ENCODE measurements at regions of chr11 and their contacts with region 1.

Region 1: GRCh38 chr11:27839226-27839870 is 139.1 kb upstream of the BDNF start:
- DNase-seq: no peak
- ATAC-seq: no peak
- H3K4me3 ChIP-seq: no peak overlapping the region
- H3K4me3 Mint-ChIP-seq: no peak overlapping the region
- H3K27ac ChIP-seq: no peak overlapping the region
- H3K27ac Mint-ChIP-seq: no peak overlapping the region
- H3K4me1 ChIP-seq: no peaks in the 10 kb centered on the region
- H3K4me1 Mint-ChIP-seq: no peaks in the 10 kb centered on the region
- H3K27me3 ChIP-seq: no peaks in the 10 kb centered on the region
- H3K27me3 Mint-ChIP-seq: peaks cover 0 to 12% (median 10%) of the 10 kb centered on the region in 5 donors

Region 2: GRCh38 chr11:28114731-28115130 is 275.4 kb after region 1 on chr11:
- CTCF ChIA-PET with region 1: no interaction called
- POLR2A ChIA-PET with region 1: no interaction called
- intact Hi-C with region 1: no loop called
- DNase-seq: no peak
- ATAC-seq: no peak
- H3K4me3 ChIP-seq: no peak overlapping the region
- H3K4me3 Mint-ChIP-seq: no peak overlapping the region
- H3K27ac ChIP-seq: no peak overlapping the region
- H3K27ac Mint-ChIP-seq: no peak overlapping the region
- H3K4me1 ChIP-seq: peaks cover 6 to 14% of the 10 kb centered on the region in 2 donors
- H3K4me1 Mint-ChIP-seq: peaks cover 13 to 79% (median 52%) of the 10 kb centered on the region in 7 donors
- H3K27me3 ChIP-seq: no peaks in the 10 kb centered on the region
- H3K27me3 Mint-ChIP-seq: no peaks in the 10 kb centered on the region

Region 3: GRCh38 chr11:28228196-28228895 is 389.0 kb after region 1 on chr11:
- CTCF ChIA-PET with region 1: no interaction called
- POLR2A ChIA-PET with region 1: no interaction called
- intact Hi-C with region 1: no loop called
- DNase-seq: no peak
- ATAC-seq: no peak
- H3K4me3 ChIP-seq: no peak overlapping the region
- H3K4me3 Mint-ChIP-seq: no peak overlapping the region
- H3K27ac ChIP-seq: no peak overlapping the region
- H3K27ac Mint-ChIP-seq: no peak overlapping the region
- H3K4me1 ChIP-seq: no peaks in the 10 kb centered on the region
- H3K4me1 Mint-ChIP-seq: peaks cover 0 to 12% (median 8%) of the 10 kb centered on the region in 7 donors
- H3K27me3 ChIP-seq: no peaks in the 10 kb centered on the region
- H3K27me3 Mint-ChIP-seq: no peaks in the 10 kb centered on the region

Region 4: GRCh38 chr11:28529540-28530410 is 690.4 kb after region 1 on chr11:
- CTCF ChIA-PET with region 1: no interaction called
- POLR2A ChIA-PET with region 1: no interaction called
- intact Hi-C with region 1: loop called in 1 of 2 experiments (anchors 5 kb)
- DNase-seq: no peak
- ATAC-seq: no peak
- H3K4me3 ChIP-seq: no peak overlapping the region
- H3K4me3 Mint-ChIP-seq: no peak overlapping the region
- H3K27ac ChIP-seq: no peak overlapping the region
- H3K27ac Mint-ChIP-seq: no peak overlapping the region
- H3K4me1 ChIP-seq: no peaks in the 10 kb centered on the region
- H3K4me1 Mint-ChIP-seq: no peaks in the 10 kb centered on the region
- H3K27me3 ChIP-seq: no peaks in the 10 kb centered on the region
- H3K27me3 Mint-ChIP-seq: no peaks in the 10 kb centered on the region

Measured in naive thymus-derived CD4-positive, alpha-beta T cell (primary cell).